AG04449 (cell line): ENCODE measurements at regions of chr10 and their contacts with region 1.

Region 1: DNA sequence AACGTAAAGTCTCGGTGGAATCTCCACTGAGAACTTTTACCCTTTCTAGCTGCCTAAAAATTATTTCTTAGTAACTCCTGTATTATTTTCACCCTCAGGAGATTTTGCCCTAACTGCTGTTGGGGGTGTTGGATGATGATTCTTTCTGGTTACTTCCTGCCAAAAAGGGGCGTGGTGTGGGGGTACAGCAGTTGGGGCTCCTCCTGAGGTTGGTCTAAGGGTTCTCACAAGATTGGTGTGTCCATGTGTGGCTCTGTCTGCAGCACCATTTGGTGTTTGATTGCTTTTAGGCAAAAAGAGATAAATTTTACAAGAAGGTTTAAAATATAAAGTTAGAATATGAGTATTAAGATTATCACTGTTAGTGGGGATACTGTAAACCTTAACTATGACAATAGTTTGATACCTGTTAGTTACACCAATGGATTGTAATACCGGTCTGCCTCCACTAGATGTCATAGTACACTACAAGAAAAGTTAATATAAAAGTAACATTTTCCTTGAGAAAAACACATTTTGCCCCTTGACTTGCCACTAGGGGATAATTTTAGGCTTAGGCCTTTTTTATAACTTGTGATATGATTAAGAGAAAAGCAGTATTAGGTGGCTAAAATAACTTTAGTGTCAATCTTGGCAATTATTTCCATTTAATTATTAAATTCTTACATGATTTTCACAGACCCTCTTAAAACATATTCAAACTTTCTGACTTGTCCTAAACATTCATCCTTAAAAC is 928.7 kb downstream of the IPMK start:
- DNase-seq: peak; percentile 3
- H3K4me3 ChIP-seq: no peak overlapping the region
- CTCF ChIP-seq: peak; percentile 46

Region 2: DNA sequence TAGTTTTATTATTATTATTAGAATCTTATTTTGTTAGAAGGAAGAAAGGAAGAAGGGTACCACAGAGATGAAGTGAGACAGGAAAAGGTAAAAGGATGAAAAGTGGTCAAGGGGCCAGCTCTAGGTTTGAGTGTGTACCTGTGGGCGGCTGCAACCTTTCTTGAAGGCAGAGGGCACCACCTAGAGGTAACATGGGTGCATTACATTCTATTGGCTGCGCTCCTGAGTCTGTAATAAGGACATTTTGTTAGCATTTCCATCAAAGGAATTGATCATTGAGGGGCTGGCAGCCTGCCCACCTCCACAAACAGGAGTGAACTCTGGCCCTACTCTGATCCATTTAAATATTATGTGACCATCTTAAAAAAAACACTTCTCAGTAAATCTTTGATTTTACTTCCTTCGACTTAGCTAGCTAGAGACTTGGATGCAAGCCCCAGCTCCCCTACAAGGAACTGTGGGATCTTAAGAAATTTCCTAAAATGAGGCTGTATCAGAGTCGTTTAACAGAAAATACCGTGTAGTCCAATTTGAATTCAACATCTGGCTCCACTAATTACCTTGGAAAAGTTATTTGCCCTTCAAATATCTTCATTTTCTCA is 318.3 kb after region 1 on chr10:
- CTCF ChIA-PET with region 1: interaction called, 10 read pairs
- POLR2A ChIA-PET with region 1: no interaction called
- DNase-seq: no peak
- H3K4me3 ChIP-seq: no peak overlapping the region
- CTCF ChIP-seq: peak; percentile 69

Region 3: GRCh38 chr10:58064714-58065528 is 725.9 kb after region 1 on chr10:
- CTCF ChIA-PET with region 1: interaction called, 53 read pairs
- POLR2A ChIA-PET with region 1: no interaction called
- DNase-seq: no peak
- H3K4me3 ChIP-seq: no peak overlapping the region
- CTCF ChIP-seq: peak; percentile 60

Region 4: GRCh38 chr10:58152673-58153263 is 813.8 kb after region 1 on chr10:
- CTCF ChIA-PET with region 1: interaction called, 11 read pairs
- POLR2A ChIA-PET with region 1: no interaction called
- DNase-seq: no peak
- H3K4me3 ChIP-seq: no peak overlapping the region
- CTCF ChIP-seq: peak; percentile 49